Activated T-helper 1 cell treated with anti-CD3 and anti-CD28 coated beads, Interleukin-12 subunit alpha, Interleukin-12 subunit beta, Interleukin-2, Interleukin-4 antibody, amounts not matched to agents 30 ng/mL and 10 ng/mL and 1 ng/mL, durations not matched to agents 14 hours and 24 hours and 36 hours (primary cell): ENCODE measurements at regions of chr17 and their contacts with region 1.

Region 1: DNA sequence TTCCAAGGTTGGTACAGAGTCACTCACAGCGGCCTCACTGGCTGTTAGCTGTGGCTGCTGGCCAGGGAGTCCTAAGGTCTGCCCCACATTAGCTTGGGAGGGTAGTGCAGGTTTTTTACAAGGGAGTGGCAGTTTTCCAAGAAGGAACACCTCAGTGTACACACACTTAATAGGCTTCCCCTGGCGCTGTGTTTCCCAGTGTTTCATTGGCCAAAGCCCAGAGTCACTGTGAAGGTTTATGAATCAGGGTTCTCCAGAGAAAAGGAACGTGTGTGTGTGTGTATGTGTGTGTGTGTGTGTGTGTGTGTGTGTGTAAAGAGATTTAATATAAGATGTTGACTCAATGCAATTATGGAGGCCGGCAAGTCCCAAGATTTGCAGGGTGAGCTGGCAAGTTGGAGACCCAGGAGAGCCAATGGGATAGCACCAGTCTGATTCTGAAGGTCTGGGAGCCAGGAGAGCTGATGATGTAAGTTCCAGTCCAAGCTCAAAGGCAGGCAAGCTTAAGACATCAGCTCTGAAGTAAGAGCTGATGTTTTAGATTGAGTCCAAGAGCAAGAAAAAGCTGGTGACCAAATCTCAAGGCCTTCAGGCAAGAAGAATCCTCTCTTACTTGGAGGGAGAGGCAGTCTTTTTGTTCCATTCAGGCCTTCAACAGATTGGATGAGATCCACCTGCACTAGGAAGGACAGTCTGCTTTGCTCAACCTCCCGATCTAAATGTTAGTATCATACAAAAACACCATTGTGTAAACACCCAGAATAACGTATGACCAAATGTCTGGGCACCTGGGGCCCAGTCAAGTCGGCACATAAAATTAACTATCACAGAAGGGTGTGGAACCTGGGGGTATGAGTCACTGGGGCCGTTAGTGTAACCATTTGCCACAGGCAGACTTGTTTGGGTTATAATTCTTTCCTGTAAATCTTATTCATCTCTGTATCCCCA is 206.8 kb downstream of the PRKCA start:
- DNase-seq: peak; percentile 29
- H3K4me3 Mint-ChIP-seq: peak overlapping the region; percentile 77
- H3K27ac Mint-ChIP-seq: peak overlapping the region; percentile 97
- H3K4me1 Mint-ChIP-seq: peaks cover 82% of the 10 kb centered on the region
- H3K27me3 Mint-ChIP-seq: no peaks in the 10 kb centered on the region

Region 2: GRCh38 chr17:66459811-66460270 is 49.3 kb before region 1 on chr17:
- intact Hi-C with region 1: no loop called
- DNase-seq: no peak
- H3K4me3 Mint-ChIP-seq: no peak overlapping the region
- H3K27ac Mint-ChIP-seq: peak overlapping the region; percentile 47
- H3K4me1 Mint-ChIP-seq: peaks cover 39% of the 10 kb centered on the region
- H3K27me3 Mint-ChIP-seq: no peaks in the 10 kb centered on the region

Region 3: DNA sequence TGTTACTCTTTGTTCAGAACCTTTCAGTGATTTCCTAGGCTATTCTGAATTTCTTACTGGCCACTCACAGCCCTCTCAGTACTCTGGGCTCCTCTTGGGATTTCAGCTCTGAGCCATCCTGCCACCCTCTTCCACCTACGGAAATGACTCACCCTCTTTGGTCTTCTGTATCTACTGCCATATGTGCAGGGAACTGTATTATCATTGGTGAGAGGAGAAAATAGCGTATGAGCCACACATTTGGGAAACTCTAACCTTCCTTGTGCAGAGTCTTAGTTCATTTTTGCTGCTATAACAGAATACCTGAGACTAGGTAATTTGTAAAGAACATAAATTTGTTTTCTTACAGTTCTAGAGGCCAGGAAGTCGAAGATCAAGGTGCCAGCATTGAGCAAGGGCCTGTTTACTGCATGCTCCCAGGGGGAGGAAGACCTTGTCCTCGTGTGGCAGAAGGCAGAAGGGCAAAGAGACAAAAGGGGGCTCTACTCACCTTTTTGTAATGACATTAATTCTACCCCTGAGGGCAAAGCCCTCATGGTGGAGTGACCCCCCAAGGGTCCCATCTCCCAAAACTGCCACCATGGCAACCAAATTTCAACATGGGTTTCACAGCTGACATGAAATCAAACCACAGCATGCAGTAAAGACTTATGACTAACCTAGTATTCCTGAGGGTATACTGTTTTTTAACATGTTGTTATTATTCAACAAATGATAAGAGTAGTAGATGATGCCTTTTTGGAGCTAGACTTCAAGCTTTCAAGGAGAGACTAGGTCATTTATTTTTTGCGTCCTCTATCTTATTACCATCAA is 15.0 kb before region 1 on chr17:
- intact Hi-C with region 1: loop called (anchors 1 kb)
- DNase-seq: no peak
- H3K4me3 Mint-ChIP-seq: peak overlapping the region; percentile 19
- H3K27ac Mint-ChIP-seq: peak overlapping the region; percentile 71
- H3K4me1 Mint-ChIP-seq: peaks cover 46% of the 10 kb centered on the region
- H3K27me3 Mint-ChIP-seq: no peaks in the 10 kb centered on the region

Region 4: GRCh38 chr17:66523378-66524200 is 14.4 kb after region 1 on chr17:
- intact Hi-C with region 1: loop called (anchors 1 kb)
- DNase-seq: no peak
- H3K4me3 Mint-ChIP-seq: no peak overlapping the region
- H3K27ac Mint-ChIP-seq: peak overlapping the region; percentile 47
- H3K4me1 Mint-ChIP-seq: peaks cover 81% of the 10 kb centered on the region
- H3K27me3 Mint-ChIP-seq: no peaks in the 10 kb centered on the region

Region 5: DNA sequence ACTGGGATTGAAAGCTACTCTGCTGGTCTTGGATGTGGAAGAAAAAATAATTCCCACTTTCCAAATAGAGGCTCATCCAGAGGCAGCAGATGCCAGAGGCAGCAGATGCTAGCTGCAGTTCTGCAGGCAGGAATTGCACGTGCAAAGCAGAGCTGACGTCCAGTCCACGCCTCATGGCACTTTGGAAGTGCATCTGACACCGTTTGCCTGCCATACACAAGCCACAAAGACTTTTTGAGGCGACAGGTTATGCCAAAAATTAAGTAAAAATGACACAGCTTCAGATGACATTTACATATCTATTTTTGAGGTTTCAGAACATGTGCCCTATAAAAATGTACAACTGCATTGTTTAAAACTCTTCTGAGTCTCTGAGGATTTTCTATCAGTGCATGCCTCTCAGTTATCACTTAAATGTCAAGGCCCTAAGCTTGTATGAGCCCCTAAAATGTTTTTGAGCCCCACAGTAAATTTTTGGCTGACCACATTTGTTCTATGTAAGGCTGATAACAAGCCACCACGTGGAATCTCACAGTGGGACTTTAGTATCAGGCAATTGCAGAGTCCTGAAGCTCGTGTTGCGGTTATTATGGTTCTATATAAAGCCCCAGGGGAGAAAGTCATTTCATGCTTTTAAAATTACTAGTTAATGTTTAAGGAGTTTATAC is 32.4 kb after region 1 on chr17:
- intact Hi-C with region 1: loop called (anchors 1 kb)
- DNase-seq: no peak
- H3K4me3 Mint-ChIP-seq: no peak overlapping the region
- H3K27ac Mint-ChIP-seq: peak overlapping the region; percentile 83
- H3K4me1 Mint-ChIP-seq: peaks cover 54% of the 10 kb centered on the region
- H3K27me3 Mint-ChIP-seq: no peaks in the 10 kb centered on the region

Region 6: GRCh38 chr17:66604376-66604775 is 95.2 kb after region 1 on chr17:
- intact Hi-C with region 1: no loop called
- DNase-seq: no peak
- H3K4me3 Mint-ChIP-seq: no peak overlapping the region
- H3K27ac Mint-ChIP-seq: no peak overlapping the region
- H3K4me1 Mint-ChIP-seq: peaks cover 9% of the 10 kb centered on the region
- H3K27me3 Mint-ChIP-seq: no peaks in the 10 kb centered on the region